Naive thymus-derived CD4-positive, alpha-beta T cell (primary cell): ENCODE measurements at regions of chr7 and their contacts with region 1.

Region 1: GRCh38 chr7:44044315-44045225 is at the start of gene DBNL:
- DNase-seq: peak; percentile 79 to 96 (median 84)
- ATAC-seq: peak; percentile 68
- H3K4me3 ChIP-seq: peak within 1 kb of the TSS; percentile 87
- H3K4me3 Mint-ChIP-seq: peak within 1 kb of the TSS; percentile 84 to 97 (median 92)
- H3K27ac ChIP-seq: peak within 1 kb of the TSS; percentile 93
- H3K27ac Mint-ChIP-seq: peak within 1 kb of the TSS; percentile 86 to 99 (median 96)
- H3K4me1 ChIP-seq: peaks cover 23 to 41% of the 10 kb centered on the region in 2 donors
- H3K4me1 Mint-ChIP-seq: peaks cover 38 to 60% (median 55%) of the 10 kb centered on the region in 7 donors
- H3K27me3 ChIP-seq: no peaks in the 10 kb centered on the region
- H3K27me3 Mint-ChIP-seq: no peaks in the 10 kb centered on the region
- total RNA-seq, gene DBNL: 112 to 182 (median 164) TPM

Region 2: GRCh38 chr7:43926798-43927123 is 117.8 kb before region 1 on chr7:
- CTCF ChIA-PET with region 1: no interaction called
- POLR2A ChIA-PET with region 1: no interaction called
- intact Hi-C with region 1: no loop called
- DNase-seq: no peak
- ATAC-seq: no peak
- H3K4me3 ChIP-seq: peak overlapping the region; percentile 73
- H3K4me3 Mint-ChIP-seq: peak overlapping the region; percentile 86 to 95 (median 93)
- H3K27ac ChIP-seq: peak overlapping the region; percentile 94
- H3K27ac Mint-ChIP-seq: peak overlapping the region; percentile 92 to 98 (median 96)
- H3K4me1 ChIP-seq: peaks cover 6 to 16% of the 10 kb centered on the region in 2 donors
- H3K4me1 Mint-ChIP-seq: peaks cover 20 to 60% (median 45%) of the 10 kb centered on the region in 7 donors
- H3K27me3 ChIP-seq: no peaks in the 10 kb centered on the region
- H3K27me3 Mint-ChIP-seq: no peaks in the 10 kb centered on the region

Region 3: DNA sequence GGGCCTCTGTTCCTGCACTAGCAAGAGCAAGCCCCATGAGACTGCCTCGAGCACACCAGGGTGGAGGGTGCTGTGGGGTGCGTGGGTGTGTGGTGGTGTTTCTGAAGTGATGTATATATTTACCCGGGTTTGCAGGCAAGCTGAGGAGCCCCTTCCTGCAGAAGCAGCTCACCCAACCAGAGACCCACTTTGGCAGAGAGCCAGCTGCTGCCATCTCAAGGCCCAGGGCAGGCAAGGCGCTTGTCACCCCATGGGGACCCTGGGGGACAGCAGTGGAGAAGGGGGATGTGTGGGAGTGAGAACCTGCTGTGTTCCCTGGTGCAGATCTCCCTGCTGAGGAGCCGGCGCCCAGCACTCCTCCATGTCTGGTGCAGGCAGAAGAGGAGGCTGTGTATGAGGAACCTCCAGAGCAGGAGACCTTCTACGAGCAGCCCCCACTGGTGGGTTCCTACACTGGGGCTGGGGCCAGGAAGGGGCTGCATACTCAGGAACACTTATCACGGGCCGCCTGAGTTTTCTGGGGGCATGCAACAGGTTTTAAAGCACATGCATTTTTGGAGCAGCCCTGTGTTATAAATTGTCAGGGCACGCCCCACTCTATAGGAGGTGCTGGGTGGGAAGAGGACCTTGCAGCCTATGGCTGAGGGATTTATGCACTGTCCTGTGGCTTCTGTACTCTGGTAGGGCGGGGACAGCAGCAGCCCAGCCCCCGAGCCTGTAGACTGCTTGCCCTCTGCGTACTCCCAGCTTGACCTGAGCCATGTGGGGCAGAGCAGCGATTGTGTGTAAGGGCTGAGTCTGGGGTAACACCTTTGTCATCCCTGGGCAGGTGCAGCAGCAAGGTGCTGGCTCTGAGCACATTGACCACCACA is 14.9 kb after region 1 on chr7:
- CTCF ChIA-PET with region 1: interaction called, 4 read pairs
- POLR2A ChIA-PET with region 1: interaction called, 66 read pairs
- intact Hi-C with region 1: no loop called
- DNase-seq: no peak
- ATAC-seq: peak; percentile 30
- H3K4me3 ChIP-seq: no peak overlapping the region
- H3K4me3 Mint-ChIP-seq: no peak overlapping the region
- H3K27ac ChIP-seq: no peak overlapping the region
- H3K27ac Mint-ChIP-seq: peak overlapping the region in 4 of 9 donors; percentile 45 to 72 (median 52)
- H3K4me1 ChIP-seq: peaks cover 0 to 4% of the 10 kb centered on the region in 2 donors
- H3K4me1 Mint-ChIP-seq: peaks cover 4 to 24% (median 13%) of the 10 kb centered on the region in 7 donors
- H3K27me3 ChIP-seq: no peaks in the 10 kb centered on the region
- H3K27me3 Mint-ChIP-seq: no peaks in the 10 kb centered on the region

Region 4: GRCh38 chr7:44372560-44373417 is 328.2 kb after region 1 on chr7:
- CTCF ChIA-PET with region 1: no interaction called
- POLR2A ChIA-PET with region 1: no interaction called
- intact Hi-C with region 1: no loop called
- DNase-seq: no peak
- ATAC-seq: no peak
- H3K4me3 ChIP-seq: no peak overlapping the region
- H3K4me3 Mint-ChIP-seq: no peak overlapping the region
- H3K27ac ChIP-seq: no peak overlapping the region
- H3K27ac Mint-ChIP-seq: no peak overlapping the region
- H3K4me1 ChIP-seq: no peaks in the 10 kb centered on the region
- H3K4me1 Mint-ChIP-seq: peaks cover 6 to 19% (median 10%) of the 10 kb centered on the region in 7 donors
- H3K27me3 ChIP-seq: peaks cover 0 to 4% of the 10 kb centered on the region in 2 donors
- H3K27me3 Mint-ChIP-seq: peaks cover 13 to 35% (median 18%) of the 10 kb centered on the region in 5 donors